ENCODE measurements at regions of chr3 and their contacts with region 1.

Region 1: DNA sequence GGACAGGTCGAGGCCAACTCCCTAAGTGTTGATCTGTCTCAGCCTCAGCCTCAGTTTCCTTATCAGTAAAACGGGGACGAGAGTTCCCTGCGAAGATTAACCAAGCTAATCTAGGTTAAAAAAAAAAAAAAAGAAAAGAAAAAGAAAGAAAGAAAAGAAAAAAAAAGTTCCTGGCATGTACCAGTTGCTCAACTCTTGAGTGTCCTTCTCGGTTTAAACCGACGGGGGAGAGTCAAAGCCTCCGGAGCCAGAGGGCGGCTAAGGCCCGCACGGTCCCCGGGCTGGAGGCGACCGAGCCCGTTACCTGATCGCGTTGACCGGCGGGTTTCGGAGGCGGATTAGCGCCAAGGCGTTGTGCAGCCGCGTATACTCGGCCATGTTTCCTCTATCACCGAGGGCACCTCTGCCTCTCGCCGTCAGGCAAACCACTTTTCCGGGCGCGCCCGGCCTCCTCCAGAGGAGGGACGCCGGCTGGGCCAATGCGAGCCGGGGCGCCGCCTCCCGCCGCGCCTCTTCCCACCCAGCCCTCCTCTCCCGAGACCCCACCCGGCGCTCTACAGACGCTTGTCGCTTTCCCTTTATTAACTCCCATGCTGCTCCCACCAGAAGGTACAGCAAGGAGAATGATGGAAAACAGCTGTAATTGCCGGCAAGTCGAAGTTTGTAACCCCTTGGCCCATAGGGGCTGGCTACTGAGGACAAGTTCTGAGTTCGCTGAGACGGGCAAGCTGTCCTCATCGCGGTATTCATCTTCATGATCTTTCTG is at the start of gene EHHADH:
- DNase-seq: no peak
- H3K4me3 ChIP-seq: peak within 1 kb of the TSS; percentile 74
- H3K27me3 ChIP-seq: no peaks in the 10 kb centered on the region
- CTCF ChIP-seq: no peak
- polyA plus RNA-seq, gene EHHADH: 5.2 and 6.0 TPM in 2 replicates

Region 2: DNA sequence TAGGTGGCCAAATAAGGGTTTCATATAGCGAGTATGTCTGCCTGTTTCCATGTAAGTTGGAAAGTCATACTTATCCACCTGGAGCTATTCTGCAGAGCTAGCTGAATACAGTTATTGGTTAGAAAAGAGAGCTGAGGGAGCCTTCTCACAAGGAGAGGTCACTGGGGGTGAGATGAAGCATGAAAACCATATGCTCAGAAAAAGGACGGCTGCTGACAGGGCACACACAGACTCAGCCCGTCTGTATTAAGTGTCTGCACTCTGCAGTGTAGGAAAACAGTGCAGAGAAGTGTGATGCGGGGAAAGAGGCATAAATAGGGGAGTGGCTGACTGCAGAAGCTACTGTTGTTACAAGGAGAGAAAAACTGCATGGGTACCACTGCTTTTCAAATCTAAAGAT is 159.1 kb before region 1 on chr3:
- CTCF ChIA-PET with region 1: no interaction called
- POLR2A ChIA-PET with region 1: interaction called, 16 read pairs
- DNase-seq: no peak
- H3K4me3 ChIP-seq: no peak overlapping the region
- H3K27me3 ChIP-seq: no peaks in the 10 kb centered on the region
- CTCF ChIP-seq: no peak

Region 3: DNA sequence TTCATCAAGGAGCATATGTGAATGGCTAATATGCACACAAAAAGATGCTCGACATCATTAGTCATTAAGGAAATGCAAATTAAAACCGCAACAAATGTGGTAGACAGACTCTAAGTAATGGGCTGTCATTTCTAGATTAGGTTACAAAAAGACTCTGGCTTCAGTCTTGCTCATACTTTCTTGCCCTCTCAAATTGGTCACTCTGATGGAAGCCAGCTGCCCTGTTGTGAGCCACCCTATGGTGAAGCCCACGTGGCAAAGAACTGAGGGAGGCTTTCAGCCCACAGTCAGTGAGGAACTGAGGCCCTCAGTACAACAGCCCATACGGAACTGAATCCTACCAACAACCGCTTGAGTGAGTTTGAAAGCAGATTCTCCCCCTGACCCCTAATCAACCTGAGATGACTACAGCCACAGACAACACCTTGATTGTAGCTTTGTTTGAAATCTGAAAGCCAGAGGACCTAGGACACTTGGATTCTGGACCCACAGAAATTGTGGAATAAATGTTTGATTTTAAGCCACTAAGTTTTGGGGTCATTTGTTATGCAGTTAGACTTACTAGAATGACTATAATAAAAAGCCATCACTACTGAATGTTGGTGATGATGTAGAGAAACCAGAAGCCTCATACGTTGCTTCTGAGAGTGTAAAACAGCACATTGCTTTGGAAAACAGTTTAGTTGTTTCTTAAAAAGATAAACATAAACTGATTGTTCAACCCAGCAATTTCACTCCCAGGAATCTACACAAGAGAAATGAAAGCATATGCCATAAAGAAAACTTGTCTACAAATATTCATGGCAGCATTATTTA is 45.7 kb before region 1 on chr3:
- CTCF ChIA-PET with region 1: no interaction called
- POLR2A ChIA-PET with region 1: interaction called, 12 read pairs
- DNase-seq: no peak
- H3K4me3 ChIP-seq: no peak overlapping the region
- H3K27me3 ChIP-seq: no peaks in the 10 kb centered on the region
- CTCF ChIP-seq: no peak

Measured in BJ (cell line).